ENCODE measurements at regions of chr2 and their contacts with region 1.

Region 1: DNA sequence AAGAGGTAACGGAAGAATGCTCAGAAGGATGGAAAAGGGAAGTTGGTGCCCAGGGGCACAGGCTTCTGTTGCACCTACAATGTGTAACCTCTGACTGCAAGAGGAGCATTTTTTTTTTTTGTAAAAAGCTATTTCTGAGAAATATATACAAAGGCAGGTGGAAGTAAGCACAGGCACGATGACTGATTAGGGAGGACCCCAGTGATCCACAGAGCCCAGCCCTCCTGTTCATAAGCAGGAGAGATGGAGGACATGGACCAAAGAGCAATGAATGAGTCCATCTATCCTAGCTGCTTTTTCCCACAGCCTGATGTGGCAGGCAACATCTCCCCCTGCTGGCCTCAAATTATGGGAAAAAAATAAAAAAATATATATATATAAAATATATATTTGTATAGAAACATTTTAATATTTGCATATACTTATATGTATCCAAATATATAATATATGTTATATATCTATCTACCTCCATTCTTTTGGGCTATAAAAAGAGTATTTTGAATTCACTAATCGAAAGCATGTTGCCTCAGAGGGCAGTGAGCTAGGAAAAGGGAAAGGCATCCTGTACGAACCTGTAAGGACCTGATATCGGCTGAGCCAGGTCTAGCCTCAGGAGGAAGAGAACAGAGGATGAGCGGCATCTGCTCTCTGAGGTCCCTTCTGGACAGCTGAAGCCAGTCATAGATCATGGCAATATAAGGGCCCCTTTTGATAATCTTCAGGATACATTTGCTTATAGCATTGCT is 166.0 kb upstream of the STK17B start:
- DNase-seq: peak; percentile 49
- H3K4me3 Mint-ChIP-seq: no peak overlapping the region
- H3K27ac Mint-ChIP-seq: no peak overlapping the region
- H3K4me1 Mint-ChIP-seq: no peaks in the 10 kb centered on the region
- H3K27me3 Mint-ChIP-seq: no peaks in the 10 kb centered on the region
- CTCF ChIP-seq: peak; percentile 35

Region 2: DNA sequence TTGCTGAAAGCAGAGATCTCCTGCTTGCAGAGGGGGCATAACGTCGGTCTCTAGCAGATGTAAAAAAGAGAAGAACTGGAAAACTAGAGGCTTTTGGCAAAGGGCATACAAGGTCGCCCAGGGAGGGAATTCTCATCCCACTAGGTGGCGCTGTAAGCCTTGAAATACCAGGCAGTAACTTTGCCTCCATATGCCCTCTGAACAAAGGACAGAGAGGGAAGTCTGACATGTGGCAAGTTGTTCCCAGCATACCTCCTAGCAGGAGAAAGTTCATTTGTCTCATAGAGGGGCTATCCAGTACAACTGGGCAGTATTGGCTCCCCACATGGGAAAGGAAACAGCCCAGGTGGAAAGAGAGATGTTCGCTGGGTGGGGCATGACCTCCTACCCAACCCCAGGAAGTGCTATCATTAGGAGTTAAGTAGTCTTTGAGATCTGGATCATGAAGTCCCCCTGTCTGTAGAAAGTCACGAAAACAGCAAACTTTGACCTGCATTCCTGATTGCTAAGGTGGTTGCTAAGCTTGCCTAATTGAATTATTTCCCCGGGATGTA is 205.9 kb before region 1 on chr2:
- CTCF ChIA-PET with region 1: interaction called, 5 read pairs
- POLR2A ChIA-PET with region 1: no interaction called
- intact Hi-C with region 1: loop called (anchors 1 kb)
- DNase-seq: peak; percentile 73
- H3K4me3 Mint-ChIP-seq: no peak overlapping the region
- H3K27ac Mint-ChIP-seq: no peak overlapping the region
- H3K4me1 Mint-ChIP-seq: no peaks in the 10 kb centered on the region
- H3K27me3 Mint-ChIP-seq: no peaks in the 10 kb centered on the region
- CTCF ChIP-seq: peak; percentile 68

Region 3: GRCh38 chr2:196160101-196160500 is 177.3 kb before region 1 on chr2:
- CTCF ChIA-PET with region 1: interaction called, 3 read pairs
- POLR2A ChIA-PET with region 1: no interaction called
- intact Hi-C with region 1: loop called (anchors 10 kb)
- DNase-seq: peak; percentile 88
- H3K4me3 Mint-ChIP-seq: peak overlapping the region; percentile 14
- H3K27ac Mint-ChIP-seq: peak overlapping the region; percentile 27
- H3K4me1 Mint-ChIP-seq: peaks cover 2% of the 10 kb centered on the region
- H3K27me3 Mint-ChIP-seq: no peaks in the 10 kb centered on the region
- CTCF ChIP-seq: no peak

Region 4: DNA sequence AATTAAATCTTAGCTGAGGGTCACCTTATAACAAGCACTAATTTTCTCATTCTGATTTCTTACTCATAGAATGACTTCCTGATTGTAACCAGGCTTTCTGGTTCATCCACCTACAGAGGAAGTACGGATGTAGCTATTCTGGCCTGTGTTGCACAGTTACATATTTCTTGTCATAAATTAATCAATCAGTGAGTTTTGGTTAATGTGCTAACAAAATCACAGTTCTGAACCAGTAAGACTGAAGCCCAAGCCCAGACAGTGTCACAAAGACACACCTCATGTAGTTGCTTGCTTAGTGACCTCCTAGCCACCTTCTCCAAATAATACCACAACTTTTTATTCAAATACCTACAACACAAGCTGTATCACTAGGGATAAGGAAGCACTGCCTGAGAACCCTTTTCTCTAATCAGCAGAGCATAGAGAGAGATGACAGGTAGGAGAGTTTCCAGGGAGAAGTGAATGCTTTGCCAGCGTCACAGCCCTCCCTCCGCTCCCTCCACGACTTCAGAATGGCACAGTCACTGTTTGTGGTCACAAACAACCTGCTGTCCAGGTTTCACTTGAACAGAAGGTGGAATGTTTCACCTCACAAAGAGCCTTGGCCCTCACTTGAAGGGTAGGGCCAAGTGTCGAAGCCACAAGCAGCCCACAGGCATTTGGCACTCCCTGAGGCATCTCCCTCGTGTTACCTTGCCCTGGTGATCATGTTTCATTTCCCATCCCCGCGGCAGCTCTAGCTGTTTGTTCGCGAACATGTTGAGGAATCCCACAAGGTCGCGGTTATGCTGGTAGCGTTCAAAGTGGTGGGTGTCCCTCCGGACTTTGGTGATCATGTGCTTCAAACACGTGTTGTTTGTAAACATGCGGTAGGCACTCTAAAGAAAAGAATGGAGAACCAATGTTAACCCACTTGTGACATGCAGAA is 45.2 kb before region 1 on chr2:
- CTCF ChIA-PET with region 1: interaction called, 11 read pairs
- POLR2A ChIA-PET with region 1: no interaction called
- intact Hi-C with region 1: no loop called
- DNase-seq: peak; percentile 87
- H3K4me3 Mint-ChIP-seq: peak overlapping the region; percentile 4
- H3K27ac Mint-ChIP-seq: peak overlapping the region; percentile 31
- H3K4me1 Mint-ChIP-seq: peaks cover 36% of the 10 kb centered on the region
- H3K27me3 Mint-ChIP-seq: no peaks in the 10 kb centered on the region
- CTCF ChIP-seq: no peak

Measured in MCF 10A (cell line).